ENCODE measurements at regions of chr6 and their contacts with region 1.

Region 1: GRCh38 chr6:21593412-21593926 is at the start of gene SOX4:
- DNase-seq: peak; percentile 99
- H3K4me3 Mint-ChIP-seq: no peak within 1 kb of the TSS
- H3K27ac Mint-ChIP-seq: no peak within 1 kb of the TSS
- H3K4me1 Mint-ChIP-seq: peaks cover 2% of the 10 kb centered on the region
- H3K27me3 Mint-ChIP-seq: no peaks in the 10 kb centered on the region
- CTCF ChIP-seq: no peak
- total RNA-seq, gene SOX4: 109 and 120 TPM in 2 replicates

Region 2: GRCh38 chr6:20652299-20653084 is 941.0 kb before region 1 on chr6:
- CTCF ChIA-PET with region 1: interaction called, 3 read pairs
- intact Hi-C with region 1: loop called (anchors 5 kb)
- DNase-seq: no peak
- H3K4me3 Mint-ChIP-seq: peak overlapping the region; percentile 54
- H3K27ac Mint-ChIP-seq: peak overlapping the region; percentile 96
- H3K4me1 Mint-ChIP-seq: peaks cover 72% of the 10 kb centered on the region
- H3K27me3 Mint-ChIP-seq: no peaks in the 10 kb centered on the region
- CTCF ChIP-seq: no peak

Region 3: GRCh38 chr6:21109391-21110178 is 483.9 kb before region 1 on chr6:
- CTCF ChIA-PET with region 1: interaction called, 4 read pairs
- intact Hi-C with region 1: loop called (anchors 2 kb)
- DNase-seq: no peak
- H3K4me3 Mint-ChIP-seq: peak overlapping the region; percentile 7
- H3K27ac Mint-ChIP-seq: peak overlapping the region; percentile 77
- H3K4me1 Mint-ChIP-seq: peaks cover 38% of the 10 kb centered on the region
- H3K27me3 Mint-ChIP-seq: no peaks in the 10 kb centered on the region
- CTCF ChIP-seq: no peak

Region 4: DNA sequence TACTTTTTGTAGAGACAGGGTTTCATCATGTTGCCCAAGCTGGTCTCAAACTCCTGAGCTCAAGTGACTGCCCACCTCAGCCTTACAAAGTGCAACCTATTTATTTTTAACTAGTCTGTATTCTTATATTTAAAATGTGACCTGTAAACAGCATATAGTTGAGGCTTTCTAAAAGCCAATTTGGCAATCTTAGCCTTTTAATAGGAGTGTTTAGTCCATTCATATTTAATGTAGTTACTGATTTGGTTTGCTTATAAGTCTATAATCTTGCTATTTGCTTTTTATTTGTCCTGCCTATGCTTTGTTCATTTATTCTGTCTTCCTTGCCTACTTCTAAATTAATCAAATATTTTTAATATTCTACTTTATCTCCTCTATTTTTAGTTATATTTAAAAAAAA is 14.9 kb before region 1 on chr6:
- CTCF ChIA-PET with region 1: no interaction called
- intact Hi-C with region 1: no loop called
- DNase-seq: no peak
- H3K4me3 Mint-ChIP-seq: no peak overlapping the region
- H3K27ac Mint-ChIP-seq: no peak overlapping the region
- H3K4me1 Mint-ChIP-seq: no peaks in the 10 kb centered on the region
- H3K27me3 Mint-ChIP-seq: no peaks in the 10 kb centered on the region
- CTCF ChIP-seq: no peak

Region 5: DNA sequence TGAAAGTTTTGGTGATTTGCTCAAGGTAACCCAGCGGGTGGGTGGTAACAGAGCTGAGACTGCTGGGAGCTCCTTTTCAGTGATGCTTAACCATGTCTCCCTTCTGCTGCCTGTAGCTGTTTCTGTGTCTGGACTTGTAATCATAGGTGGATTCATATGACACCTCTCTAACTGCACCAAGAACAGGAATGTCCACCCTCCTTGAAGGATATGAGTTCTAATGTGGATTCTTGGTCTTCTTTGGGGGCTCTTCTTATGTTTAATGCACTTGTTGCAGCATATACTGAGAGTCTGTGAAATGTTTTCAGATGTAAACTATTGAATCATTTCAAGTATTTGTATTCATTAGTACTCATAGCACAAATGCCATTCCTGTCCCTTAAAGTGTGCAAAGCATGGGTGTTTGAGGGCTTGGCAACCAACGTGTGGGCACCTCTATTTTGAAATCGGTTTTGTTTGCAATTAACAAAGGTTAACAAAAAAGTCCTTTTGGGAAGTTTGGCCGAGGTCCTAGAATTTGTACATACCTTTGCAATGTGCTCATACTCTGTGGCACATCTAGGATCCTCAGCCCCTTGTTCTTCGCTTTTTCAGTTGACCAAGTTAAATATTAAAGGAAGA is 138.1 kb after region 1 on chr6:
- CTCF ChIA-PET with region 1: interaction called, 5 read pairs
- intact Hi-C with region 1: loop called (anchors 2 kb)
- DNase-seq: peak; percentile 74
- H3K4me3 Mint-ChIP-seq: no peak overlapping the region
- H3K27ac Mint-ChIP-seq: peak overlapping the region; percentile 22
- H3K4me1 Mint-ChIP-seq: peaks cover 62% of the 10 kb centered on the region
- H3K27me3 Mint-ChIP-seq: no peaks in the 10 kb centered on the region
- CTCF ChIP-seq: no peak

Region 6: GRCh38 chr6:21946298-21946783 is 352.9 kb after region 1 on chr6:
- CTCF ChIA-PET with region 1: interaction called, 7 read pairs
- intact Hi-C with region 1: loop called (anchors 5 kb)
- DNase-seq: peak; percentile 54
- H3K4me3 Mint-ChIP-seq: no peak overlapping the region
- H3K27ac Mint-ChIP-seq: peak overlapping the region; percentile 79
- H3K4me1 Mint-ChIP-seq: peaks cover 85% of the 10 kb centered on the region
- H3K27me3 Mint-ChIP-seq: no peaks in the 10 kb centered on the region
- CTCF ChIP-seq: no peak

Region 7: GRCh38 chr6:22657352-22657980 is 1064.0 kb after region 1 on chr6:
- CTCF ChIA-PET with region 1: no interaction called
- intact Hi-C with region 1: loop called (anchors 5 kb)
- DNase-seq: peak; percentile 28
- H3K4me3 Mint-ChIP-seq: no peak overlapping the region
- H3K27ac Mint-ChIP-seq: peak overlapping the region; percentile 25
- H3K4me1 Mint-ChIP-seq: peaks cover 50% of the 10 kb centered on the region
- H3K27me3 Mint-ChIP-seq: no peaks in the 10 kb centered on the region
- CTCF ChIP-seq: no peak

Measured in Calu3 (cell line).